ENCODE measurements at regions of chr4 and their contacts with region 1.

Region 1: DNA sequence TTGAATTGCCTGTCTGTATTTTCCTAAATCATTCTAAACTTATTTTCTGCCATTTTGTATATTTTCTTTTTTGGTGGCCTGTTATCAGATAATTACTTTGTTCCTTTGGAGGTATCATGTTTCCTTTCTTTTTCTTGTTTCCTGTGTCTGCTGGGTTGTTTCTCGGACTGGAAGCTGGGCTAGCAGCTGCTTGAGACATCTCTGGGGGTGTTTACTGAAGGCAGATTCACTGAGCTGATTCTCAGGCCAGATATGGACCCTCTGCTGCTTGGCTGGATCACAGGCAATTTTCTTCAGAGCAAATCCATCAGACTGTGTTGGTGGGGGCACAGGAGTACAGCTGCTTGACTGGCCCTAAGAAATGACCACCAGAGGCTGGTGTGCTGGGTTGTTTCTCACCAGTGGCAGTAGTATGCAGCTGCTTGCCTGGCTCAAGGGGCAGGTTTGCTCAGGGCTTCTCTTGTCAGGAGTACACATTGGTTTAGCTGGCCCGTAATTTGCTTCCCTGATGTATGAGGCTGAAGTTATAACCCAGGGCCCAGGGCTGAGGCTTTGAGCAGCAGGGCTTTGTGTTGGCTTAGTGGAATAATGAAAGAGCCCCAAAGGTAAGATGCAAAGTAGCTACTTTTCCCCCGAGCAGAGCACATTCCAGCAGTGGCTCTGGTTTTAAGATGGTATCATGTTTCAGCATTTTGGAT is 680.6 kb downstream of the TECRL start:
- DNase-seq: no peak
- ATAC-seq: no peak
- H3K4me3 ChIP-seq: no peak overlapping the region
- H3K27ac ChIP-seq: no peak overlapping the region
- H3K4me1 ChIP-seq: no peaks in the 10 kb centered on the region
- H3K27me3 ChIP-seq: no peaks in the 10 kb centered on the region
- CTCF ChIP-seq: no peak

Region 2: GRCh38 chr4:63708661-63709060 is 20.0 kb before region 1 on chr4:
- intact Hi-C with region 1: loop called in 1 of 10 experiments (anchors 1 kb)
- DNase-seq: no peak
- ATAC-seq: no peak
- H3K4me3 ChIP-seq: no peak overlapping the region
- H3K27ac ChIP-seq: no peak overlapping the region
- H3K4me1 ChIP-seq: no peaks in the 10 kb centered on the region
- H3K27me3 ChIP-seq: no peaks in the 10 kb centered on the region
- CTCF ChIP-seq: no peak